Transverse colon (tissue), 4 donors: ENCODE measurements at regions of chr22 and their contacts with region 1.

Region 1: GRCh38 chr22:45984316-45984916 is 7.5 kb upstream of the WNT7B start:
- DNase-seq: no peak
- H3K4me3 ChIP-seq: no peak overlapping the region
- H3K27ac ChIP-seq: no peak overlapping the region
- H3K4me1 ChIP-seq: no peaks in the 10 kb centered on the region
- H3K27me3 ChIP-seq: no peaks in the 10 kb centered on the region
- CTCF ChIP-seq: no peak
- EP300 ChIP-seq: no peak
- POLR2A ChIP-seq: no peak

Region 2: DNA sequence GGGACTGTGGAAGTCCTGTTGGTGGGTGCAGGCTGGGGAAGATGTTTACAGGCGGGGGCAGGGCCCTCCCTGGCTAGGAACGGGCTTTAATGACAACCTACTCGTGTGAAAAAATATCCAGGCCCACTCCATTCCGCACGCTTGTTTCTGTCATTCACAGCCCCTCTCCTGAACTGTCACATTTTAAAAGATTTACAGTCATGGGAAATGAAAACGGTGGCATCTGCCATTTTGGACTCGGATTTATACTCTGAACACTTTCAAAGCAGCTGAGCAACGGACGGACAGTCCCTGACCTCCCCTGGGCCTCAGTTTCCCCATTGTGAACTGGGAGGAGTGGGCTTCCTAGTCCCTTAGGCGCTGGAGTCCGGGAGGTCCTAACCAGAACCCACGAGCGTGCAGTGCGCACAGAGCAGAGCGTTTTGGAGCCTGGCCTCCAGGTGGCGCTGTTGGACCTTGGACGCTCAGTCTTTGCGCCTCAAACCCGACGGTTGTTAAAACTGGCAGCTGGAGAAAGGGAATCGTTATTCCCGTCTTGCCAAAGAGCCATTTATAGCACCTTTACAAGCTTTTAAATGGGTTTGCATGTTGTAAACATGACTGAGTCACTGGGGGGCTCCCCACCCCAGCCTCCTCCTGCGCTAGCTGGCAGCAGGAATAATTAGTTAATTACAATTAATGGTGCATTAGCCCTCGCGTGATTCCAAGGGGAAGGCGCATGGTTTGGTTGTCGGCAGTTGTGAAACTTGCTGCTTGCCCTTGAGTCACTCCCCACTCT is 406.5 kb before region 1 on chr22:
- in situ Hi-C with region 1: loop called in 2 of 4 experiments (anchors 10 kb)
- intact Hi-C with region 1: no loop called
- DNase-seq: peak; percentile 83
- H3K4me3 ChIP-seq: no peak overlapping the region
- H3K27ac ChIP-seq: no peak overlapping the region
- H3K4me1 ChIP-seq: peaks cover 0 to 9% (median 2%) of the 10 kb centered on the region in 4 donors
- H3K27me3 ChIP-seq: peaks cover 27% of the 10 kb centered on the region
- CTCF ChIP-seq: peak; percentile 90 to 95 (median 93)
- EP300 ChIP-seq: no peak
- POLR2A ChIP-seq: no peak

Region 3: GRCh38 chr22:45584121-45584570 is 400.3 kb before region 1 on chr22:
- in situ Hi-C with region 1: loop called in 2 of 4 experiments (anchors 10 kb)
- intact Hi-C with region 1: no loop called
- DNase-seq: no peak
- H3K4me3 ChIP-seq: no peak overlapping the region
- H3K27ac ChIP-seq: peak overlapping the region in 1 of 4 donors; percentile 23
- H3K4me1 ChIP-seq: no peaks in the 10 kb centered on the region
- H3K27me3 ChIP-seq: peaks cover under 1% of the 10 kb centered on the region
- CTCF ChIP-seq: no peak
- EP300 ChIP-seq: no peak
- POLR2A ChIP-seq: no peak

Region 4: DNA sequence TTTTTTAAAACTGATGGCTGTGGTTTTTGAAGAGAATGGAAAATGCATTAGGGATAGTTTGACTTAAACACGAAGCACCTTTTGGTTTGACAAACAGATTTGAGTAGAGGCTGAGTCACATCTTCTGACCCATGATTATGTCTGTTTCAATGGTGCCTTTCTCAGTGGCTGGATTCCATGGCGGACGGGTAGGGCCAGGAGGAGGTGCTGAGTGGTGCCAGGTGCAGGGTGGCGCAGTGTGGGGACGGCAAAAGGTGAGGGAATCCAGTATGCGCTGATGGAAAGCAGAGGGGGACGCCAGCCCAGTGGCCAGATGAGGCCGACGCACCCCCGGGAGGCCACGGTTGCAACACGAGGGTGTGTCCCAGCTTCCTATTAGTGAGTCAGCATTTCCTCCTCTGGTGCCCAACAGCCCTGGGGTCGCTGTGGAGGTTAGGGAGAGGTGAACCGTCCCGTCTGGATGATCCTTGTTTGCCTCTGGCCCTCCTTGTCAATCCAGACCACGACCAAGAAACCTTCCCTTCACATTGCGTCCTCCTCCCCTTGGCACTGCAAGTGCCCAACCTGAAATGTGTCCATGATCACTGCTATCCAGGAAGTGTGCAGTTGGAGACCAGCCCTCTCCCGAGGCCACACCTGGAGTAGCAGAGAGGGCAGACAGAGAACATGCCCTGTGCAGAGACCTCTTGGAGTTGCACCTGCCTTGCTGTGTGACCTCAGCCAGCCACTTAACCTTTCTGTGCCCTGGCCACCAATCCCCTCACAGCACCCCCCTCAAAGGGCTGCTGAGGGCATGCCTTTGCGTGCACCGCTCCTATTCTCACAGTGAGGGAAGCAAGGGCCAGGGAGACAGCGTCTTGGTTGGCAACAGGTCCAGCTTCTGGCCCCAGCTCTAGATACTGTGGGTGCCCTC is 345.3 kb before region 1 on chr22:
- in situ Hi-C with region 1: loop called in 3 of 4 experiments (anchors 10 kb)
- intact Hi-C with region 1: no loop called
- DNase-seq: peak; percentile 69
- H3K4me3 ChIP-seq: no peak overlapping the region
- H3K27ac ChIP-seq: no peak overlapping the region
- H3K4me1 ChIP-seq: peaks cover 0 to 9% (median 4%) of the 10 kb centered on the region in 4 donors
- H3K27me3 ChIP-seq: peaks cover 38% of the 10 kb centered on the region
- CTCF ChIP-seq: peak in 1 of 5 experiments; percentile 11
- EP300 ChIP-seq: no peak
- POLR2A ChIP-seq: no peak

Region 5: GRCh38 chr22:45645526-45646414 is 338.6 kb before region 1 on chr22:
- in situ Hi-C with region 1: loop called in 3 of 4 experiments (anchors 5 to 10 kb)
- intact Hi-C with region 1: no loop called
- DNase-seq: peak; percentile 81
- H3K4me3 ChIP-seq: peak overlapping the region in 2 of 4 donors; percentile 8 to 19
- H3K27ac ChIP-seq: no peak overlapping the region
- H3K4me1 ChIP-seq: peaks cover 0 to 9% (median 3%) of the 10 kb centered on the region in 4 donors
- H3K27me3 ChIP-seq: peaks cover 40% of the 10 kb centered on the region
- CTCF ChIP-seq: peak; percentile 69 to 98 (median 92)
- EP300 ChIP-seq: no peak
- POLR2A ChIP-seq: no peak

Region 6: GRCh38 chr22:45934659-45935341 is 49.6 kb before region 1 on chr22:
- in situ Hi-C with region 1: no loop called
- intact Hi-C with region 1: no loop called
- DNase-seq: no peak
- H3K4me3 ChIP-seq: no peak overlapping the region
- H3K27ac ChIP-seq: no peak overlapping the region
- H3K4me1 ChIP-seq: no peaks in the 10 kb centered on the region
- H3K27me3 ChIP-seq: peaks cover 49% of the 10 kb centered on the region
- CTCF ChIP-seq: no peak
- EP300 ChIP-seq: no peak
- POLR2A ChIP-seq: no peak